ENCODE measurements at regions of chr19 and their contacts with region 1.

Region 1: DNA sequence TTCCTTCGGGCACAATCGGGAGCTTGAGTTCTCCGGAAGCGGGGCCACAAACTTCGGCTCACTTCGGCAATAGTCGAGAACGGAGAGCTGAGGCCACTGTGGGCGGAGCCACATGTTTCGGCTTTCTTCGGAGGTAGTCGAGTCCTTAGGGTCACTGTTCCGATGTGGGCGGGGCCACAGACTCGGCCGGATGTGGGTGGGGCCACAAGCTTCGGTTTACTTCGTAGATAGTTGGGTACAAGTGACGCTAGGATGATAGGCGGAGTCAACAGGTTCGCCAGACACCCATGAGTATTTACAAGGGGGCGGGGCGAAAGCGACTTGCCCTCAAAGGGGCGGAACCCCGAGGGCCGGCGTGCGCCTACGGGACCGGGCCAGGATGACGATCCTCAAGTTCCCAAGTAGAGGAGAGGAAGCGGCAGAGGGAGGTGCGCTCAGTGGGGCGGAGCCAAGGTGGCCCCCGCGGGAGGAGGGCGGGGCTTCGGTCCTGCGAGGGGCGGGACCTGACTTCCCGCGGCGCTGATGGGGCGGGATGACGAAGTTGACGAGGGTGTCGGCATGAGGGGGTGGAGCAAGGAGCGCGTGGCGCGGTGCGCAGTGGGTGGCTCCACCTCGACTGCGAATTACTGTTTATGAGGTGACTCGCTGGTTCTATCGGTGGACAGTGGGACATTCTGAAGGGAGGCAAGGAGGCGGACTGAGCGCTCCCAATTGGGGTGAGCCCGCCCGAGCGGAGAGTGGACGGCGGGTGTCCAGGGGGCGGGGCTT is 539 bp upstream of the MBOAT7 start:
- DNase-seq: peak; percentile 100
- ATAC-seq: peak; percentile 58
- H3K4me3 ChIP-seq: peak overlapping the region; percentile 74
- H3K27ac ChIP-seq: peak overlapping the region; percentile 89
- H3K4me1 ChIP-seq: peaks cover 19% of the 10 kb centered on the region
- H3K27me3 ChIP-seq: no peaks in the 10 kb centered on the region
- CTCF ChIP-seq: no peak

Region 2: DNA sequence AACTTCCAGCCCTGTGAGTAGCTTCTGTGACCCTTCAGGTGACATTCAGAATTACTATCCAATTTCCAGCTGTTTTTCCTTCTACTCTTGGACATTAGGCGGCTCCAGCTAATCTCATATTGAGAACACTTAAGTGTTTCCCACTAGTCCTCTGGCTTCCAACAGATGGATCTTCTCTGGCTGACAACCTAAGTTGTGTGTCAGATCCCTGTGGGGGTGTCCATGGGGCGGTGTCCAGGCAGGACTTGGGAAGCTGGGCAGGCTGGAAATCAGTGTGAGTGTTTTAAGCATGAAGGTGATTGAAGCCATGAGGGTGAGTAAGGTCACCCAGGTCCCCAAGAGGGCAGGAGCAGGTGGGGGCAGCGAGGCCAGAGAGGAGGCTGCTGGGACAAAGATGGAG is 42.2 kb before region 1 on chr19:
- CTCF ChIA-PET with region 1: no interaction called
- POLR2A ChIA-PET with region 1: no interaction called
- intact Hi-C with region 1: no loop called
- DNase-seq: no peak
- ATAC-seq: no peak
- H3K4me3 ChIP-seq: no peak overlapping the region
- H3K27ac ChIP-seq: no peak overlapping the region
- H3K4me1 ChIP-seq: no peaks in the 10 kb centered on the region
- H3K27me3 ChIP-seq: no peaks in the 10 kb centered on the region
- CTCF ChIP-seq: no peak

Region 3: GRCh38 chr19:54159352-54160181 is 30.4 kb before region 1 on chr19 and contains the start of gene LENG1:
- CTCF ChIA-PET with region 1: interaction called, 5 read pairs
- POLR2A ChIA-PET with region 1: interaction called, 4 read pairs
- intact Hi-C with region 1: loop called (anchors 2 kb)
- DNase-seq: peak; percentile 100
- ATAC-seq: peak; percentile 81
- H3K4me3 ChIP-seq: peak within 1 kb of the TSS; percentile 71
- H3K27ac ChIP-seq: peak within 1 kb of the TSS; percentile 72
- H3K4me1 ChIP-seq: peaks cover 38% of the 10 kb centered on the region
- H3K27me3 ChIP-seq: no peaks in the 10 kb centered on the region
- CTCF ChIP-seq: peak; percentile 34; the same call in 1 of the 2 replicates
- total RNA-seq, gene LENG1: 13.6 and 18.8 TPM in 2 replicates

Region 4: DNA sequence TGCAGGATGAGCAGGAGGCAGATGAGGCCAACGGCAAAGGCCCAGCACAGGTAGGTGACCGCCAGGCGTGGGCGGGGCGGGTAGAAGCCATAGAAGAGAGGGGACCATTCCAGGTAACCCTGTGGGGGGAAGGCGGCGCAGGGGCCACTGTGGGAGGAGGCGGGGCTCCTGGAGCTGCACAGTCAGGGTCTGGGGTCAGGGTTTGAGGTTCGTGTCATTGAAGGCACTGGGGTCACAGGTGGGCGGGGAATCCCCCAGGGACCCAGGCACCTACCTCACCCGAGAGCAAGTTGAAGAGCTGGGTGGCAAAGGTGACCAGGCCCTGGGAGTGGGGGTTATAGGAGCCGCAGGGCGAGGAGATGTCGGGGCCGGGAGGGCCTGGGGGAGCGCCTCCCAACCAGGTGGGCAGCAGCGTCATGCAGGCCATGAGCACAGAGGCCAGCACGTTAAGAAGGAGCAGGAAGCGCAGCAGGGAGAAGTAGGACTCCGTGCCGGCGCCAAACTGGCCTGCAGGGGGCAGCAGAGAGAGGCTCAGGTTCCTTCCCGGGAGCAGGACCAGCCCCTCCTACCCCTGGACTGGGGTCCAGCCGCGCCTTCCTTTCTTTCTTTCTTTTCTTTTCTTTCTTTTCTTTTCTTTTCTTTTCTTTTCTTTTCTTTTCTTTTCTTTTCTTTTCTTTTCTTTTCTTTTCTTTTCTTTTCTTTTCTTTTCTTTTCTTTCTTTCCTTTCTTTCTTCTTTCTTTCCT is 21.6 kb before region 1 on chr19:
- CTCF ChIA-PET with region 1: interaction called, 6 read pairs
- POLR2A ChIA-PET with region 1: interaction called, 20 read pairs
- intact Hi-C with region 1: loop called (anchors 2 kb)
- DNase-seq: peak; percentile 95
- ATAC-seq: peak; percentile 61
- H3K4me3 ChIP-seq: no peak overlapping the region
- H3K27ac ChIP-seq: no peak overlapping the region
- H3K4me1 ChIP-seq: peaks cover 12% of the 10 kb centered on the region
- H3K27me3 ChIP-seq: no peaks in the 10 kb centered on the region
- CTCF ChIP-seq: peak; percentile 76

Region 5: GRCh38 chr19:54203151-54203611 is 13.3 kb after region 1 on chr19:
- CTCF ChIA-PET with region 1: interaction called, 6 read pairs
- POLR2A ChIA-PET with region 1: interaction called, 7 read pairs
- intact Hi-C with region 1: loop called (anchors 1 kb)
- DNase-seq: peak; percentile 46
- ATAC-seq: peak; percentile 29
- H3K4me3 ChIP-seq: peak overlapping the region; percentile 96
- H3K27ac ChIP-seq: no peak overlapping the region
- H3K4me1 ChIP-seq: peaks cover 48% of the 10 kb centered on the region
- H3K27me3 ChIP-seq: no peaks in the 10 kb centered on the region
- CTCF ChIP-seq: no peak

Region 6: DNA sequence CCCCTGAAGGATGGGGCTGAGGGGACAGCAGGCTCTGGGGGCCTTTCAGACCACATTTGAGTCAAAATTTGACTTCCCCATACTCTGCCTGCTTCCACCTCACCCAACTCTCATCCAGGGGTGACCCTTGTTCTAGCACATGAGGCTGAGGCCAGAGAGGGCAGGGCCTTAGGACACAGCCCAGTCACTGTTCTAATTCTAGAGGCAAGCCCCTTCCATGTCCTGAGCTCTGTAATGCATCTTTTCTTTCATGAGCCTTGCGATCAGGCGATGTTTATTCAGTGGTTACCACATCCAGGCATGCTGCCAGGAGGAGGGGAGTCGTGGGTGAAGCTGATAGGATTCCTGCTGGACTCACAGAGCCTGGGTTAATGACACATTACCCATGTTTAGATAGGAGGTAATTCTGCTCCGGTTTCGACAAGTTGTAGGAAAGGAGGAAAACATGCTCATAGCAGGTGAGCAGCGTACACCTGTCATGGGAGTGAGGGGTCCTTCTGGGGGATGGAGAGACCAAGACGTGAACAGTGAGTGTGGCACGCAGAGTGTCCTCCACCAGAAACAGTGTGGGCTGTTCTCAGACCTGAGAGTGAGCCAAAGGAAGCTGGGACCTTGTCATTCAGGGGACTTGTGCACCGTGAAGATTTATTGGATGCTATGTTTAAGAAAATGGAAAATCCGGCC is 20.0 kb after region 1 on chr19:
- CTCF ChIA-PET with region 1: no interaction called
- POLR2A ChIA-PET with region 1: interaction called, 18 read pairs
- intact Hi-C with region 1: no loop called
- DNase-seq: peak; percentile 99
- ATAC-seq: peak; percentile 91
- H3K4me3 ChIP-seq: no peak overlapping the region
- H3K27ac ChIP-seq: peak overlapping the region; percentile 72
- H3K4me1 ChIP-seq: peaks cover 36% of the 10 kb centered on the region
- H3K27me3 ChIP-seq: no peaks in the 10 kb centered on the region
- CTCF ChIP-seq: no peak

Region 7: GRCh38 chr19:54231077-54231931 is 41.4 kb after region 1 on chr19:
- CTCF ChIA-PET with region 1: no interaction called
- POLR2A ChIA-PET with region 1: interaction called, 4 read pairs
- intact Hi-C with region 1: loop called (anchors 1 kb)
- DNase-seq: peak; percentile 93
- ATAC-seq: peak; percentile 98
- H3K4me3 ChIP-seq: no peak overlapping the region
- H3K27ac ChIP-seq: no peak overlapping the region
- H3K4me1 ChIP-seq: peaks cover 8% of the 10 kb centered on the region
- H3K27me3 ChIP-seq: peaks cover 10% of the 10 kb centered on the region; the same call in 1 of the 2 replicates
- CTCF ChIP-seq: peak; percentile 99

Region 8: GRCh38 chr19:54281007-54281728 is 91.2 kb after region 1 on chr19 and contains the start of gene LILRB2:
- CTCF ChIA-PET with region 1: no interaction called
- POLR2A ChIA-PET with region 1: no interaction called
- intact Hi-C with region 1: no loop called
- DNase-seq: no peak
- ATAC-seq: no peak
- H3K4me3 ChIP-seq: no peak within 1 kb of the TSS
- H3K27ac ChIP-seq: no peak within 1 kb of the TSS
- H3K4me1 ChIP-seq: no peaks in the 10 kb centered on the region
- H3K27me3 ChIP-seq: peaks cover 76% of the 10 kb centered on the region
- CTCF ChIP-seq: no peak
- total RNA-seq, gene LILRB2: not detected in 2 replicates

Region 9: DNA sequence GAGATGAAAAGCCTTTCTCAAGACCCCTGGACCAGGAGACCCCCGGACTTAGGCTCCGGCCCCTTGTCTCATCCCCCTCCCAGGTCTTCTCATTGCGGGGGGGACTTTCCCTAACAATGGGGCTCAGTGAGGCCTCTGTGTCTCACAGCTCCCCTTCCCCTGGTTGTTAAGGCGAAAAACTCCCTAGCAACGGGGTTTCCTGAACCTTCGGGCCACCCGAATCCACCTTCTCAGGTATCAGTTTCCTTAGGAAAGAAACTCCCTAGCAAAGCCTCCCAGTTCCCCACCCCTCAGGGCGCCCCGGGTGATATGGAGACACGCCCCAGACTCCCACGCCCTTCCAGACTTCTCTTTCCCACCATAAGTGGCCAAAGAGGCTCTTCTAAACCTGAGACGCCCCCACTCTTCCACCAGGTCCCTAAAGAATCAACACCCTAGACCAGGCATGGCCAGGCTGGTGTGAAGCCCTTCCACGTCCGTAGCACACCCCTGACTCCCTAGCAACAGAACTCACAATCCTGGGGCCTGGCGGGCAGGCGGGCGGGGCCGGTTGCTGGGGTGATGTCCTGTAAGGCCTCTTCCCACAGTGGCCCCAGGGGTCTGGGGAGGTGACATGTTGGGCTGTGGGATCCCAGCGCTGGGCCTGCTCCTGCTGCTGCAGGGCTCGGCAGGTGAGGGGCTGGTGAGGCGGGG is 1186.5 kb after region 1 on chr19 and contains the start of gene TMEM190:
- CTCF ChIA-PET with region 1: no interaction called
- POLR2A ChIA-PET with region 1: interaction called, 25 read pairs
- intact Hi-C with region 1: no loop called
- DNase-seq: no peak
- ATAC-seq: peak; percentile 10; the same call in 1 of the 2 replicates
- H3K4me3 ChIP-seq: no peak within 1 kb of the TSS
- H3K27ac ChIP-seq: no peak within 1 kb of the TSS
- H3K4me1 ChIP-seq: peaks cover 30% of the 10 kb centered on the region
- H3K27me3 ChIP-seq: no peaks in the 10 kb centered on the region
- CTCF ChIP-seq: no peak
- total RNA-seq, gene TMEM190: not detected in 2 replicates